ENCODE measurements at regions of chr20 and their contacts with region 1.

Region 1: GRCh38 chr20:36951198-36951976 is at the start of gene SAMHD1:
- DNase-seq: peak; percentile 97 to 99 (median 98)
- H3K4me3 ChIP-seq: peak within 1 kb of the TSS; percentile 54 to 100 (median 90)
- H3K27ac ChIP-seq: peak within 1 kb of the TSS; percentile 58 to 89 (median 82)
- H3K4me1 ChIP-seq: peaks cover 16 to 47% of the 10 kb centered on the region in 2 donors
- H3K27me3 ChIP-seq: no peaks in the 10 kb centered on the region
- CTCF ChIP-seq: peak in 3 of 6 experiments; percentile 19 to 40 (median 38)
- POLR2A ChIP-seq: peak; percentile 66 to 87
- total RNA-seq, gene SAMHD1: 27.1 to 232 (median 132) TPM

Region 2: GRCh38 chr20:37178839-37179670 is 227.7 kb after region 1 on chr20 and contains the starts of genes MROH8 and RPN2:
- intact Hi-C with region 1: loop called in 1 of 2 experiments (anchors 5 kb)
- DNase-seq: peak; percentile 97 to 99 (median 98)
- H3K4me3 ChIP-seq: peak within 1 kb of the TSS; percentile 67 to 96 (median 94)
- H3K27ac ChIP-seq: peak within 1 kb of the TSS; percentile 88 to 99 (median 96)
- H3K4me1 ChIP-seq: peaks cover 10 to 32% of the 10 kb centered on the region in 2 donors
- H3K27me3 ChIP-seq: no peaks in the 10 kb centered on the region
- CTCF ChIP-seq: peak in 1 of 6 experiments; percentile 22
- POLR2A ChIP-seq: peak; percentile 16 to 68
- total RNA-seq, gene MROH8: 1.3 to 6.5 (median 3.5) TPM
- total RNA-seq, gene RPN2: 165 to 340 (median 235) TPM

Region 3: GRCh38 chr20:37220731-37221130 is 269.3 kb after region 1 on chr20:
- intact Hi-C with region 1: no loop called
- DNase-seq: peak in 1 of 7 donors; percentile 40
- H3K4me3 ChIP-seq: no peak overlapping the region
- H3K27ac ChIP-seq: no peak overlapping the region
- H3K4me1 ChIP-seq: peaks cover 4 to 27% of the 10 kb centered on the region in 2 donors
- H3K27me3 ChIP-seq: no peaks in the 10 kb centered on the region
- CTCF ChIP-seq: no peak
- POLR2A ChIP-seq: no peak

Measured in adrenal gland (tissue), 19 donors.